ENCODE measurements at regions of chr12 and their contacts with region 1.

Region 1: GRCh38 chr12:13362260-13362841 is 165.8 kb downstream of the EMP1 start:
- DNase-seq: peak; percentile 35 to 63 (median 57)
- H3K4me3 ChIP-seq: no peak overlapping the region
- H3K27ac ChIP-seq: no peak overlapping the region
- H3K4me1 ChIP-seq: no peaks in the 10 kb centered on the region
- H3K27me3 ChIP-seq: peaks cover 0 to 21% (median 7%) of the 10 kb centered on the region in 5 experiments

Region 2: GRCh38 chr12:13373131-13373530 is 10.8 kb after region 1 on chr12:
- CTCF ChIA-PET with region 1: interaction called, 18 read pairs
- POLR2A ChIA-PET with region 1: no interaction called
- DNase-seq: no peak
- H3K4me3 ChIP-seq: no peak overlapping the region
- H3K27ac ChIP-seq: no peak overlapping the region
- H3K4me1 ChIP-seq: no peaks in the 10 kb centered on the region
- H3K27me3 ChIP-seq: peaks cover 0 to 3% (median 0%) of the 10 kb centered on the region in 5 experiments